Aorta (tissue), 5 donors: ENCODE measurements at regions of chr10 and their contacts with region 1.

Region 1: GRCh38 chr10:91271886-91272285 is 51.4 kb downstream of the PCGF5 start:
- DNase-seq: no peak
- ATAC-seq: no peak
- H3K4me3 ChIP-seq: no peak overlapping the region
- H3K27ac ChIP-seq: no peak overlapping the region
- H3K4me1 ChIP-seq: no peaks in the 10 kb centered on the region
- H3K27me3 ChIP-seq: no peaks in the 10 kb centered on the region

Region 2: DNA sequence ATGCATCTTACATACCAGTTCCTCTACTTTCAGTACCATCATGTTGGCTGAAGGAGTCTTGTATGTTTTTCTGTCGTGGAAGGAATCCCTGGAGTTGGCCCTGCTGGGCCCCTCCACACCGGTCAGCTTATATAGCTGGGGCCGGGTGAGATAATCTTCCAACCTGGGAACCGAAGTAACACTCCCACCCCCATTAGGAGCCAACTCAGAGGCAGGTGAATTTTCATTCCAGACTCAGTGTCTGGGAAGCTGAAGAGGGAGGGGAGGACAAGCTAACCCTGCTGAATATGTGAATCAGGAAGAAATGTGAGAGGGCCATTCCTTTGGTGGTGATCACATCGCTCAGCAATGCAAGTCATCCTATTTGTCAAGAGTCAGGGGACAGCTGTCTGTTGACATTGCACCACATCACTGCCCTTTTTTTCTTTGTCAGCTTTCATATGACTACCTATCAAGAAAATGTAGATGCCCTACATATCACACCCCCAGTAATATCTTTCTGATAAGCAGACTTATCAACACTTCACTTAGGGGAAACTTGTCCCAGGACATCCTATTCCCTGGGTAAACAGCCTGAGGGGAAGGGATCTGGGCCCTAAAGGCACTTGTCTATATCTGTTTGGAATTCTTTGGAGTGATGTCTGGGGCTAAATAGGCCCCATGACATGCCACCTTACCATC is 350.8 kb before region 1 on chr10 and contains the start of gene ANKRD1:
- intact Hi-C with region 1: loop called in 1 of 2 experiments (anchors 5 kb)
- DNase-seq: no peak
- ATAC-seq: no peak
- H3K4me3 ChIP-seq: no peak within 1 kb of the TSS
- H3K27ac ChIP-seq: peak within 1 kb of the TSS in 1 of 2 donors; percentile 45
- H3K4me1 ChIP-seq: peaks cover 0 to 3% of the 10 kb centered on the region in 2 donors
- H3K27me3 ChIP-seq: no peaks in the 10 kb centered on the region
- total RNA-seq, gene ANKRD1: 0.30 to 62.9 TPM

Region 3: DNA sequence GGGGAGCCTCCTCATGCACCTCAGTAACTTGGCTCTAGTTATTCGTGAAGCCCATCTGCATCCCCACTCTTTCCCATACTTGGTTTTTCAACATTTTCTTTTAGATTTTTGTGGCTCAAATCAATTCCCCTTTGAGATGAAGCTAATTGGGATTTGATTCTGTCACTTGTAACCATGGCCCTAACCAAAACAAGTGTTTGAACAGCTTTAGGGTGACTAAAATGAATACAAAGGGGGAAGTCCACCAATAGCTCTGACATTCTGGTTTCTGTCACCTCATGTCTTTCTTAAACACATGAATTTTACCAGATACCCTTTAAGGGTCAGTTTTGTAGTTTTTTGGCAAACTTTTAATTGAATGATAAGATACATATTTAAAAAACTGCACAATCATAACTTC is 35.6 kb after region 1 on chr10:
- intact Hi-C with region 1: loop called in 1 of 2 experiments (anchors 2 kb)
- DNase-seq: no peak
- ATAC-seq: no peak
- H3K4me3 ChIP-seq: no peak overlapping the region
- H3K27ac ChIP-seq: no peak overlapping the region
- H3K4me1 ChIP-seq: no peaks in the 10 kb centered on the region
- H3K27me3 ChIP-seq: no peaks in the 10 kb centered on the region